ENCODE measurements at regions of chr12 and their contacts with region 1.

Region 1: GRCh38 chr12:57487597-57488401 is at the start of gene MARS1:
- DNase-seq: peak; percentile 90 to 97 (median 94)
- H3K4me3 ChIP-seq: peak within 1 kb of the TSS; percentile 78 to 95
- H3K4me3 Mint-ChIP-seq: peak within 1 kb of the TSS; percentile 95 to 99 (median 98)
- H3K27ac ChIP-seq: peak within 1 kb of the TSS; percentile 84
- H3K27ac Mint-ChIP-seq: peak within 1 kb of the TSS; percentile 90 to 99 (median 98)
- H3K4me1 ChIP-seq: peaks cover 23% of the 10 kb centered on the region
- H3K4me1 Mint-ChIP-seq: peaks cover 22 to 43% (median 28%) of the 10 kb centered on the region in 4 donors
- H3K27me3 ChIP-seq: no peaks in the 10 kb centered on the region
- H3K27me3 Mint-ChIP-seq: no peaks in the 10 kb centered on the region
- total RNA-seq, gene MARS1: 224 to 242 TPM

Region 2: GRCh38 chr12:56775638-56776037 is 712.2 kb before region 1 on chr12:
- CTCF ChIA-PET with region 1: no interaction called
- POLR2A ChIA-PET with region 1: no interaction called
- intact Hi-C with region 1: no loop called
- DNase-seq: no peak
- H3K4me3 ChIP-seq: no peak overlapping the region
- H3K4me3 Mint-ChIP-seq: no peak overlapping the region
- H3K27ac ChIP-seq: no peak overlapping the region
- H3K27ac Mint-ChIP-seq: no peak overlapping the region
- H3K4me1 ChIP-seq: no peaks in the 10 kb centered on the region
- H3K4me1 Mint-ChIP-seq: no peaks in the 10 kb centered on the region
- H3K27me3 ChIP-seq: no peaks in the 10 kb centered on the region
- H3K27me3 Mint-ChIP-seq: no peaks in the 10 kb centered on the region

Region 3: GRCh38 chr12:57476162-57476992 is 11.4 kb before region 1 on chr12:
- CTCF ChIA-PET with region 1: interaction called, 29 read pairs
- POLR2A ChIA-PET with region 1: interaction called, 75 read pairs
- intact Hi-C with region 1: loop called (anchors 1 kb)
- DNase-seq: peak; percentile 65 to 80 (median 71)
- H3K4me3 ChIP-seq: peak overlapping the region; percentile 91 to 97
- H3K4me3 Mint-ChIP-seq: peak overlapping the region; percentile 89 to 99 (median 98)
- H3K27ac ChIP-seq: peak overlapping the region; percentile 86
- H3K27ac Mint-ChIP-seq: peak overlapping the region; percentile 98 to 100 (median 99)
- H3K4me1 ChIP-seq: peaks cover 81% of the 10 kb centered on the region
- H3K4me1 Mint-ChIP-seq: peaks cover 51 to 89% (median 69%) of the 10 kb centered on the region in 4 donors
- H3K27me3 ChIP-seq: no peaks in the 10 kb centered on the region
- H3K27me3 Mint-ChIP-seq: no peaks in the 10 kb centered on the region

Region 4: GRCh38 chr12:57546438-57547383 is 58.9 kb after region 1 on chr12 and contains the start of gene DCTN2:
- CTCF ChIA-PET with region 1: no interaction called
- POLR2A ChIA-PET with region 1: no interaction called
- intact Hi-C with region 1: loop called (anchors 2 kb)
- DNase-seq: peak; percentile 91 to 97 (median 93)
- H3K4me3 ChIP-seq: peak within 1 kb of the TSS; percentile 54 to 71
- H3K4me3 Mint-ChIP-seq: peak within 1 kb of the TSS; percentile 93 to 100 (median 98)
- H3K27ac ChIP-seq: peak within 1 kb of the TSS; percentile 84
- H3K27ac Mint-ChIP-seq: peak within 1 kb of the TSS; percentile 84 to 99 (median 97)
- H3K4me1 ChIP-seq: peaks cover 37% of the 10 kb centered on the region
- H3K4me1 Mint-ChIP-seq: peaks cover 32 to 53% (median 42%) of the 10 kb centered on the region in 4 donors
- H3K27me3 ChIP-seq: no peaks in the 10 kb centered on the region
- H3K27me3 Mint-ChIP-seq: peaks cover 2 to 4% of the 10 kb centered on the region in 2 donors
- total RNA-seq, gene DCTN2: 69.4 to 70.7 TPM

Region 5: GRCh38 chr12:57693659-57694458 is 206.1 kb after region 1 on chr12 and contains the start of gene OS9:
- CTCF ChIA-PET with region 1: no interaction called
- POLR2A ChIA-PET with region 1: no interaction called
- intact Hi-C with region 1: loop called (anchors 5 kb)
- DNase-seq: peak; percentile 93 to 100 (median 99)
- H3K4me3 ChIP-seq: peak within 1 kb of the TSS; percentile 75 to 82
- H3K4me3 Mint-ChIP-seq: no peak within 1 kb of the TSS
- H3K27ac ChIP-seq: peak within 1 kb of the TSS; percentile 79
- H3K27ac Mint-ChIP-seq: no peak within 1 kb of the TSS
- H3K4me1 ChIP-seq: peaks cover 26% of the 10 kb centered on the region
- H3K4me1 Mint-ChIP-seq: peaks cover 0 to 18% (median 5%) of the 10 kb centered on the region in 4 donors
- H3K27me3 ChIP-seq: no peaks in the 10 kb centered on the region
- H3K27me3 Mint-ChIP-seq: peaks cover 4 to 6% of the 10 kb centered on the region in 2 donors
- total RNA-seq, gene OS9: 189 to 195 TPM